ENCODE measurements at regions of chr1 and their contacts with region 1.

Region 1: GRCh38 chr1:15046487-15047165 is 106.9 kb upstream of the TMEM51 start:
- DNase-seq: peak; percentile 66
- H3K4me3 ChIP-seq: no peak overlapping the region
- H3K27ac ChIP-seq: no peak overlapping the region
- H3K4me1 ChIP-seq: no peaks in the 10 kb centered on the region
- H3K27me3 ChIP-seq: no peaks in the 10 kb centered on the region
- CTCF ChIP-seq: peak; percentile 90

Region 2: DNA sequence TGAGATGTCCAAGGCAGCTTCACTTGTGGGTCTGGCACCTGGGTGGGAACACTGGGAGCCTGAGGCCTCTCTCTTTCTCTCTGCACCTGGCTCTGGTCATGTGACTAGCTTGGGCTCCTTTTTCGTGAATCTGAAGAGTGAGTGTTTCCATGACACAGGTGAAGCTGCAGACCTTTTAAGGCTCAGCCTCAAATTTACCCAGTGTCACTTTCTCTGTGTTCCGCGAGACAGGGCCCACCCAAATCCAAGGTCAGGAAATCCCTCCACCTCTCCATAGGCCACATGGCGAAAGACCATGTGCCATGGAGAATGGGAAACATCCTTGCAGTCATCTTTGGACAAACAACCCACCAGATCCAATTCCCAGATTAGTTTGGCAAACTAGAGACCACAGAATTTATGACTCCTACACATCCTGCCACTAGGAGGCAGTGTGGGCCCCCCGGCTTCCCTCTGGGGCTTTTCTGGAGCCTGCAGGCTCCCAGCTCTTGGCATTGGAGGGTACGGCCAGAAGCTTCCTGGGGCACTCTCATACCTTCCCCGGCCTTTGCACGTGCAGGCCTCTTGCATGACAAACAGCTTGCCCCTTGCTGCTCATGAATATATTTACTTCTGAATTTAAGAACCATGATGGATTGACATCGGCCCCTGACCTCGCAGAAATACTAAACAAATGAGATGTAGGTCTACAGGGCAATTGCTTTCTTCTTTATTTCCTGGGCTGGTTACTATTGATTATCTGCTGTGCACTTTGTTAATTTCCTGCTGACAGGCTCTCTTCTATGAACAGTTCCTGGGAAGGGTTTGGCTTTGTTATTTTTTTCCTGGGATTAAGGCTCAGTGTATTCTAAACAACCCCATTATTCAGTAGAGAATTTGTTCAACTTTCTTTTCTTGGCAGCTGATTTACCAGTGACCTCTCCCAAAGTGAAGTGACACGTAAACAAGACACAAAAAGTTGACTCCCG is 267.4 kb before region 1 on chr1:
- CTCF ChIA-PET with region 1: interaction called, 3 read pairs
- POLR2A ChIA-PET with region 1: no interaction called
- intact Hi-C with region 1: loop called (anchors 5 kb)
- DNase-seq: peak; percentile 55
- H3K4me3 ChIP-seq: no peak overlapping the region
- H3K27ac ChIP-seq: no peak overlapping the region
- H3K4me1 ChIP-seq: no peaks in the 10 kb centered on the region
- H3K27me3 ChIP-seq: no peaks in the 10 kb centered on the region
- CTCF ChIP-seq: peak; percentile 83

Region 3: GRCh38 chr1:14804626-14805025 is 242.0 kb before region 1 on chr1:
- CTCF ChIA-PET with region 1: no interaction called
- POLR2A ChIA-PET with region 1: no interaction called
- intact Hi-C with region 1: no loop called
- DNase-seq: peak; percentile 30
- H3K4me3 ChIP-seq: no peak overlapping the region
- H3K27ac ChIP-seq: no peak overlapping the region
- H3K4me1 ChIP-seq: no peaks in the 10 kb centered on the region
- H3K27me3 ChIP-seq: no peaks in the 10 kb centered on the region
- CTCF ChIP-seq: peak; percentile 51; the same call in 1 of the 2 replicates

Region 4: GRCh38 chr1:14923727-14924452 is 122.7 kb before region 1 on chr1:
- CTCF ChIA-PET with region 1: no interaction called
- POLR2A ChIA-PET with region 1: no interaction called
- intact Hi-C with region 1: no loop called
- DNase-seq: peak; percentile 62
- H3K4me3 ChIP-seq: peak overlapping the region; percentile 58
- H3K27ac ChIP-seq: no peak overlapping the region
- H3K4me1 ChIP-seq: no peaks in the 10 kb centered on the region
- H3K27me3 ChIP-seq: peaks cover 10% of the 10 kb centered on the region
- CTCF ChIP-seq: no peak

Region 5: GRCh38 chr1:15021065-15021745 is 25.4 kb before region 1 on chr1:
- CTCF ChIA-PET with region 1: no interaction called
- POLR2A ChIA-PET with region 1: no interaction called
- intact Hi-C with region 1: no loop called
- DNase-seq: no peak
- H3K4me3 ChIP-seq: no peak overlapping the region
- H3K27ac ChIP-seq: no peak overlapping the region
- H3K4me1 ChIP-seq: no peaks in the 10 kb centered on the region
- H3K27me3 ChIP-seq: no peaks in the 10 kb centered on the region
- CTCF ChIP-seq: no peak

Measured in A673 (cell line).